ENCODE measurements at regions of chrX and their contacts with region 1.

Region 1: GRCh38 chrX:155026726-155027508 is at the start of gene FUNDC2:
- DNase-seq: peak; percentile 88
- H3K4me3 Mint-ChIP-seq: peak within 1 kb of the TSS; percentile 75
- H3K27ac Mint-ChIP-seq: peak within 1 kb of the TSS; percentile 90
- H3K4me1 Mint-ChIP-seq: peaks cover 13% of the 10 kb centered on the region
- H3K27me3 Mint-ChIP-seq: peaks cover 36% of the 10 kb centered on the region
- CTCF ChIP-seq: no peak
- total RNA-seq, gene FUNDC2: 54.8 and 70.2 TPM in 2 replicates

Region 2: GRCh38 chrX:155001873-155002272 is 25.0 kb before region 1 on chrX:
- CTCF ChIA-PET with region 1: no interaction called
- POLR2A ChIA-PET with region 1: no interaction called
- intact Hi-C with region 1: no loop called
- DNase-seq: no peak
- H3K4me3 Mint-ChIP-seq: no peak overlapping the region
- H3K27ac Mint-ChIP-seq: no peak overlapping the region
- H3K4me1 Mint-ChIP-seq: no peaks in the 10 kb centered on the region
- H3K27me3 Mint-ChIP-seq: peaks cover 11% of the 10 kb centered on the region
- CTCF ChIP-seq: no peak

Region 3: DNA sequence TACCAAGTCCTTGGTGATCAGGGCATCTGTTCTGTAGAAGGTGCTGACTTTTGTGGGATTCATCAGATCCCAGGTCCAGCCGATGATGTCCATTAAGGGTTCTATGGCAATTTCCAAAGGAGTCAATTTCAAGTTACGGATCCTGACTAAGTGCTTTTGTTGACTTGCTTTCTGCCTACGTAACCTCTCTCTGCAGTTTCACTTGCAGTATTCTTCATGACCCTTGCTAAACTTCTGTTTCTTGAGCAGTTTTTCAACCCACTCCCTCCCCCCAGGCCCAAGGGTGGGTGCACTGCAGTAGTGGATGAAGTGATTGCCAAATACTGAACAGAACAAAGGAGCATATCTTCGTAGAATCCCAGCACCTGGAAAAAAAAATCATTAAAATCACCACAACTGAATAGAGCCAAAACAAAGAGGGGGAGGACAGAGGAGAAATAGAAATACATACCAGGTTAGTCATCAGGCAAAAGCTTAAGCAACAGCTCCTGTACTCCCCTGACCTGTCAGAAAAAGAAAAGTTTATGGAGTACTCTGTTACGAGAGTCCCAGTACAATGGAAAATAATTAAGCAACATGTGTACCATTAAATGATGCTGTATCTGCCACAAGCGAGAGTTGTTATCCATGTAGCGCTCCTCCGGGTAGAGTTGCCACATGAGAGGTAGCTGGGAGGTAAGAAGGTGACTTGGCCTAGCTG is 38.3 kb after region 1 on chrX:
- CTCF ChIA-PET with region 1: interaction called, 4 read pairs
- POLR2A ChIA-PET with region 1: interaction called, 35 read pairs
- intact Hi-C with region 1: loop called (anchors 2 kb)
- DNase-seq: peak; percentile 86
- H3K4me3 Mint-ChIP-seq: peak overlapping the region; percentile 80
- H3K27ac Mint-ChIP-seq: peak overlapping the region; percentile 92
- H3K4me1 Mint-ChIP-seq: peaks cover 24% of the 10 kb centered on the region
- H3K27me3 Mint-ChIP-seq: peaks cover 10% of the 10 kb centered on the region
- CTCF ChIP-seq: no peak

Region 4: GRCh38 chrX:155070975-155071693 is 44.2 kb after region 1 on chrX and contains the starts of genes BRCC3, CMC4 and MTCP1:
- CTCF ChIA-PET with region 1: no interaction called
- POLR2A ChIA-PET with region 1: interaction called, 35 read pairs
- intact Hi-C with region 1: loop called (anchors 2 kb)
- DNase-seq: peak; percentile 75
- H3K4me3 Mint-ChIP-seq: peak within 1 kb of the TSS; percentile 83
- H3K27ac Mint-ChIP-seq: peak within 1 kb of the TSS; percentile 65
- H3K4me1 Mint-ChIP-seq: peaks cover 30% of the 10 kb centered on the region
- H3K27me3 Mint-ChIP-seq: peaks cover 31% of the 10 kb centered on the region
- CTCF ChIP-seq: no peak
- total RNA-seq, gene BRCC3: 21.1 and 22.9 TPM in 2 replicates
- total RNA-seq, gene CMC4: 8.0 and 10.1 TPM in 2 replicates
- total RNA-seq, gene MTCP1: 21.3 and 32.2 TPM in 2 replicates

Region 5: GRCh38 chrX:155577681-155578080 is 550.8 kb after region 1 on chrX:
- CTCF ChIA-PET with region 1: no interaction called
- POLR2A ChIA-PET with region 1: no interaction called
- intact Hi-C with region 1: no loop called
- DNase-seq: no peak
- H3K4me3 Mint-ChIP-seq: no peak overlapping the region
- H3K27ac Mint-ChIP-seq: no peak overlapping the region
- H3K4me1 Mint-ChIP-seq: no peaks in the 10 kb centered on the region
- H3K27me3 Mint-ChIP-seq: no peaks in the 10 kb centered on the region
- CTCF ChIP-seq: no peak